ENCODE measurements at regions of chr17 and their contacts with region 1.

Region 1: DNA sequence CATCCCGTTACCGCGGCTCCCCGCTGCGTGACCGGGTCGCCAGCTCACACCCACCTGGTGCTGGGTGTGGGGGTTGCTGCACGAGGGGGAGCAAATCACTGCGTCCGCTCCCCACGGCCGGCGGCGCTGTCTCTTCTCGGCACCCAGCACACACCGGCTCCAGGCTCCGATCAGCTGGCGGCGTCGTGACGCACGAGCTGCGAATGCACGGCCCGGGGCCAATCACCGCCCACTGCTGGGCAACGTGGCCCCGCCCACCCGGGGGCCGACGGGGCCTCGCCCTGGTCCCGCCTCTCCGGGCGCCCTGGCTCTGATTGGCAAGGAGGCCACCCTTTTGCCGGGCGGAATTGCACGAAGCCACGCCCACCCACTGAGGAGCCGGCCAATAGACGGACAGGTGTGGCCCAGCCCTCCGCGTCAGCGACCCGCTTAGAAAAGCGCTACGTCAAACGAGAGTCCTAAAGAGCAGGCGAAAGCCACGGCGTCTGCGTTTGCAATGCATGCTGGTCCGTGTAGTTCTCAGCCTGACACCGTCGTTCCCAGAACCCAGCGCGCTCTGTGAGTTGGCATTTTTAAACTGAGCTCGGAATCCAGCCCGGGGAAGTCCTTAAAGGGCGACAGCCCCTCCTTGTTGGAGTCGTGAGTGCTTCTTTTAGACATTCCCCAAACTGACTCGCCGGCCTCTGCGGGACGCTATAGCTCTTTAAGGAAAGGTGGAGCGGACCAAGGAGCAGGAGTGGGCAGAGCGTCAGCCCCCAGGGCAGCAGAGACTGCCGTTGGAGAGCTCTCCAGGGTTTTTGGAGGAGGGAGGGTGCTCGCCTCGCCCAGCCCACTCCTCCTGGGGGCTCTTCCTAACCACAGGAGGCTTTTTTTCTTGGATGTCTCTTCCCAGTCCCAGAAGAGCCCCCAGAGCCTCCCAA is 6.2 kb upstream of the TLCD2 start:
- DNase-seq: peak; percentile 100
- H3K4me3 ChIP-seq: peak overlapping the region; percentile 72 to 97 (median 78)
- H3K27ac ChIP-seq: peak overlapping the region; percentile 90
- H3K4me1 ChIP-seq: peaks cover 45% of the 10 kb centered on the region
- H3K27me3 ChIP-seq: no peaks in the 10 kb centered on the region
- CTCF ChIP-seq: peak in 1 of 2 donors; percentile 32

Region 2: DNA sequence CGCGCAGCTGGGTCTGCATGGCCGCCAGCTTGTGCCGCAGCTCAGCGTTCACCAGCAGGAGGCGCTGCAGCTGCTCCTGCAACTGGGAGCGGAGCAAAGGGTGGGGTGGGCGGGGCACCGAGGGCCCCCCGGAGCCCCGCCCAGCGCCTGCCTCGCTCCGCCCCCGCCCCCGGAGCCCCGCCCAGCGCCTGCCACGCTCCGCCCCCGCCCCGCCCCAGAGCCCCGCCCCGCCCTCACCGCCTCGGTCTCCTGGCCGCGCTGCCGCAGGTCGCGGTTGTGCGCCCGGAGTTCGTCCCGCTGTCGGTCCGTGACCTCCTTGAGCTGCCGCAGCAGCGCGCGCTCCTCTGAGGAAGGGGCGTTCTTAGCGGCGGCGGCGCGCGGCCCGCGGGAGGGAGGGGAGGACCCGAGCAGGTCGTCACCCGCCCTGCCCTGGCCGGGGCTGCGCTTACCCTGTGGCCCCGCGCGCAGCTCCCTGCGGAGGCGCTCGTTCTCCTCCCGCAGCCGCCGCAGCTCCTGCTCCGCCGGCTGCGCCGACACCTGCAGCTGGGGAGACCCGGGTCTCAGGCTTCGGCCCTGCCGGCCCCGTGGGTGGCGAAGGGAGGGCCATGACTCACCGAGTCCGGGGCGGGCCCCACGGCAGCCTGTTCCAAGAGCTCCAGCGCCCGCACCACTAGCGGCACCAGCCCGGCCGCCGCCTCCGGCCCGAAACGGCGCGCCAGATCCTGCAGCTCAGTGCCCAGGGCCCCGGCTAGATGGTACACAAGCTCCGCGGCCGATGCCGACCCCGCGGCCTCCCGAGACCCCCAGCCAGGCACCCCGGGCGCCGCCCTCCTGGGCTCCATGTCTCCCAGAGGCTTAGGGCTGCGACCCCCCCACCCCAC is 67.1 kb before region 1 on chr17:
- CTCF ChIA-PET with region 1: interaction called, 3 read pairs
- dilution Hi-C with region 1: no loop called
- in situ Hi-C with region 1: no loop called
- intact Hi-C with region 1: loop called (anchors 2 kb)
- DNase-seq: peak; percentile 86
- H3K4me3 ChIP-seq: peak overlapping the region; percentile 34 to 77 (median 63)
- H3K27ac ChIP-seq: peak overlapping the region; percentile 34
- H3K4me1 ChIP-seq: peaks cover 41% of the 10 kb centered on the region
- H3K27me3 ChIP-seq: no peaks in the 10 kb centered on the region
- CTCF ChIP-seq: peak; percentile 72 to 85

Region 3: DNA sequence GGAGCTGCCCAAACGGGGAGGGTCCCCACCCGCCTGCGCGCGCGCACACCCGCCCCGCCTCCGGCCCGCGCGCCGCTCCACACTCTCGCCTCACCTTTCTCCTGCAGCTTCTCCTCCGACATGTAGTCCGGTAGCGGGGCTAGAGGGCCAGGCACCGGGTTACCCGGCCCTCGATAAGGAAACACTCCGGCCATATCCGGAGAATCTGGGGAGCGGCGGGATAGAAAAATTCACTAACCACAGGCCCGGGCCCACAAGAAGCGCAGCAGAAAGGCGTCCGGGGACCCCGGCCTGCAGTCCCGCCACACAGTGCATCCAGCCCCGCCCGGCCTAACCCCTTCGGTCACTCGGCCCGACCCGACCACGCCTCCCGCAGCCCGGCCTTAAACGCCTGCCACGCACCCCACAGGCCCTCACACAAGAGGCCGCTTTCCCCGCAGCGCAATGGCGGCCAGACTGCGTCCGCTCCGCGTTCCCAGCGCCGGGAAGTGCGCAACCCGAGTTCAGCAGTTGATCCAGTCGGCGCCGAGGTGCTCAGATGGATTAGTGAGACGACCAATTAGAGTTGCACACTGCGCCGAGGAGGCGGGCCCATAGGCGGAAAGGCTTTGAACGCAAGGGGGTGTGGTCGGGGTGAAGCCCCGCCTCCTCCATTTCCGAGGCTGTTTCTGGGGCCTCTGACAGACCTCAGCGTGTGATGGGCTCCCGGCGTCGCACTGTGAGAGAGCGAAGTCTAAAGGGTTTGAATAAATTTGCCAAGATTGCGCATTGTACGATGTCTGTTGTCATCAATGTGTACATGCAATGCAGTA is 31.8 kb before region 1 on chr17 and contains the start of gene PRPF8:
- CTCF ChIA-PET with region 1: no interaction called
- dilution Hi-C with region 1: loop called (anchors 5 kb)
- in situ Hi-C with region 1: no loop called
- intact Hi-C with region 1: loop called (anchors 1 kb)
- DNase-seq: peak; percentile 95
- H3K4me3 ChIP-seq: peak within 1 kb of the TSS; percentile 80 to 96 (median 93)
- H3K27ac ChIP-seq: peak within 1 kb of the TSS; percentile 66
- H3K4me1 ChIP-seq: peaks cover 9% of the 10 kb centered on the region
- H3K27me3 ChIP-seq: no peaks in the 10 kb centered on the region
- CTCF ChIP-seq: no peak
- total RNA-seq, gene PRPF8: 114 to 243 TPM

Region 4: GRCh38 chr17:1847191-1847590 is 130.9 kb after region 1 on chr17:
- CTCF ChIA-PET with region 1: no interaction called
- dilution Hi-C with region 1: loop called (anchors 5 kb)
- in situ Hi-C with region 1: loop called in 1 of 2 experiments (anchors 25 kb)
- intact Hi-C with region 1: no loop called
- DNase-seq: no peak
- H3K4me3 ChIP-seq: no peak overlapping the region
- H3K27ac ChIP-seq: no peak overlapping the region
- H3K4me1 ChIP-seq: no peaks in the 10 kb centered on the region
- H3K27me3 ChIP-seq: no peaks in the 10 kb centered on the region
- CTCF ChIP-seq: no peak

Region 5: DNA sequence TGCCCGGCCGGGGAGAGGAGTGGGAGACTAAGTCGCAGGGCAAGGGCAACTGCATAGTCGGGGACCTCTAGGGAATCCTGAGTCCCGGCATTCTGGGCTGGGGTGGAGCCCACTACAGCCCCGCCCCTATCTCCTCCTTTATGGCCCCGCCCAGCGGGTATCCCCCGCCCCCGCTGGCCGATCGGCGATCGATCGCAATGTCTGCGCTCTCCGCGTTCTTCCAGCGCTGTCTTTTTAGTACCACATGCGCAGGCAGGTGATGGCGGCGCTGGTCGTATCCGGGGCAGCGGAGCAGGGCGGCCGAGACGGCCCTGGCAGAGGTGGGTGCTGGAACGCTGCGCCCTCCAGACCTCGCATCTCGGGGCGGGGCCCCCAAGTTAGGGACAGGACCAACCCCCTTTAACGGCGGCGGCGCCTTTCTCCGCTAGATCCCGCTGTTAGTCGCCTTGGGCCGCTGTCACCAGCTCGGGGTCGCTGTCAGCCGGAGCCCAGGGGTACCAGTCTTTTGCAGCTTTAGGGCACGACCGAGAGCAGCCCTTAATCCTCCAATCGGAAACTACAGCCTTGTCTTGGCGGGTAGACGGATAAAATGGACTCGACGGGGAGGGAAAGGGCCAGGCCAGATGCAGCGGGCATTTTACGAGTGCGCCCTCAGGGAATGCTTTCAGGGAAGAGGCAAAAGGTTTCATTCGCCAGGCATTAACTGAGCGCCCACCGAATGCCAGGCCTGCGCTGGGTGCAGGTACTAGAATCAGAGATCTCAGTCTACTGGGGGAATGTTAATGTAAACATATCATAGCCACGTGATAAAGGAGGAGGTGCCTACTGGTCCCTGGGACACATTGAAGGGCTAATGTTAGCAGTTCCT is 313.8 kb after region 1 on chr17 and contains the start of gene DPH1:
- CTCF ChIA-PET with region 1: interaction called, 3 read pairs
- dilution Hi-C with region 1: no loop called
- in situ Hi-C with region 1: loop called in 1 of 2 experiments (anchors 25 kb)
- intact Hi-C with region 1: loop called (anchors 1 kb)
- DNase-seq: peak; percentile 84
- H3K4me3 ChIP-seq: peak within 1 kb of the TSS; percentile 95 to 99 (median 97)
- H3K27ac ChIP-seq: peak within 1 kb of the TSS; percentile 78
- H3K4me1 ChIP-seq: peaks cover 10% of the 10 kb centered on the region
- H3K27me3 ChIP-seq: no peaks in the 10 kb centered on the region
- CTCF ChIP-seq: no peak
- total RNA-seq, gene DPH1: 29.0 to 36.2 TPM

Region 6: GRCh38 chr17:2401426-2402221 is 685.3 kb after region 1 on chr17:
- CTCF ChIA-PET with region 1: no interaction called
- dilution Hi-C with region 1: no loop called
- in situ Hi-C with region 1: no loop called
- intact Hi-C with region 1: loop called (anchors 10 kb)
- DNase-seq: peak; percentile 99
- H3K4me3 ChIP-seq: peak overlapping the region; percentile 51 to 66 (median 66)
- H3K27ac ChIP-seq: peak overlapping the region; percentile 98
- H3K4me1 ChIP-seq: peaks cover 64% of the 10 kb centered on the region
- H3K27me3 ChIP-seq: no peaks in the 10 kb centered on the region
- CTCF ChIP-seq: no peak